GM12878 (cell line): ENCODE measurements at regions of chr6 and their contacts with region 1.

Region 1: DNA sequence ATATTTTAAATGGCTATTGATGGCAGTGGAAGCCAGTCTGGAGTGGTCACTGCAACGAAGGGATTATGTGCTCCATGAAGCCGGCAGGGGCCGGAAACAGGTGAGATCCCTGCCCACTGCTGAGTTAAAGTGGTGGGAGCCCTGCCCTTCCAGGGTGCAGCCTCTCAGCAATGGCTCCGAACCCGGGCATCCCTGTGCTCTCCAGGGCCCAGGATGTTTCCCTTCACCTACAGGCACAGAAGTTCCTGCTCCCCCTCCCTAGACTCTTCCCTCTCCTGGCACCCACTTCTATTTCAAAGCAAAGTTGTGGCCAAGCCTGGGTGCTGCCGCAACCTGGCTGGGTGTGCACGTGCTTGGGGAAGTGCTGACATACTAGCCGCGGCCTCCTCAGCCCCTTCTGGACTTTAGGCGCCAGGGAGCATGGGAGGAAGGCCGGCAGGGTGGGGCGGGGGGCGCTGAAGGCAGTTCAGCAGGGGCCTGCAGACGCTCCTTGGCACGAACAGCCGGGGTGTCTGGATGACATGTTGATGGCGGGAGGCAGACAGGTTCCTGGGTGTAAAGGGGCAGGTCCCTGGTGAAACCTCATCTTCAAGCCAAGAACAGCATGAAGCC is 452.3 kb downstream of the HTR1B start:
- DNase-seq: no peak
- ATAC-seq: no peak
- H3K4me3 ChIP-seq: no peak overlapping the region
- H3K27ac ChIP-seq: no peak overlapping the region
- H3K4me1 ChIP-seq: no peaks in the 10 kb centered on the region
- H3K27me3 ChIP-seq: no peaks in the 10 kb centered on the region
- CTCF ChIP-seq: no peak
- EP300 ChIP-seq: no peak
- POLR2A ChIP-seq: no peak
- RAD21 ChIP-seq: no peak

Region 2: DNA sequence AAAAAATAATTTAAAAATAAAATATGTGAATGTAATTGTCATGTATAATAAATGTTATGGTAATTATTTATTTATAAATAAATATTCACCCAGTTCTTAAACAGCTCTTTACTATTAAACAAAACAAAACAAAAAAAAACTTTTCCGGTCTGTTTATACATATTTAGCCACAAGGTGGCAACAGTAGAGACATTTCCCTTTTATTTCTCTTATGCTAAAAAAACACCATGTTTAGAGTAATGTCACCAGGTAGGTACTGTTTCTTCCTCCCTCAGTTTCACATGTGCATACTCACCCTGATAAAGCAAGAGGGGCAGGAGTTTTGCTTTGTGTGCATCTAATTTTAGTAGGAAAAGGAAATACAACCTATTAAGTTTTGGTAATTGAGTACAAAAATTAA is 328.2 kb before region 1 on chr6:
- CTCF ChIA-PET with region 1: no interaction called
- POLR2A ChIA-PET with region 1: no interaction called
- RAD21 ChIA-PET with region 1: no interaction called
- SMC1A ChIA-PET with region 1: no interaction called
- in situ Hi-C with region 1: no loop called
- intact Hi-C with region 1: loop called (anchors 10 kb)
- DNase-seq: no peak
- ATAC-seq: peak; percentile 55; the same call in 2 of the 3 replicates
- H3K4me3 ChIP-seq: no peak overlapping the region
- H3K27ac ChIP-seq: no peak overlapping the region
- H3K4me1 ChIP-seq: no peaks in the 10 kb centered on the region
- H3K27me3 ChIP-seq: no peaks in the 10 kb centered on the region
- CTCF ChIP-seq: peak in 2 of 3 experiments; percentile 21 to 31; a peak in 3 of 6 replicates
- EP300 ChIP-seq: no peak
- POLR2A ChIP-seq: no peak
- RAD21 ChIP-seq: no peak